ENCODE measurements at regions of chrX and their contacts with region 1.

Region 1: DNA sequence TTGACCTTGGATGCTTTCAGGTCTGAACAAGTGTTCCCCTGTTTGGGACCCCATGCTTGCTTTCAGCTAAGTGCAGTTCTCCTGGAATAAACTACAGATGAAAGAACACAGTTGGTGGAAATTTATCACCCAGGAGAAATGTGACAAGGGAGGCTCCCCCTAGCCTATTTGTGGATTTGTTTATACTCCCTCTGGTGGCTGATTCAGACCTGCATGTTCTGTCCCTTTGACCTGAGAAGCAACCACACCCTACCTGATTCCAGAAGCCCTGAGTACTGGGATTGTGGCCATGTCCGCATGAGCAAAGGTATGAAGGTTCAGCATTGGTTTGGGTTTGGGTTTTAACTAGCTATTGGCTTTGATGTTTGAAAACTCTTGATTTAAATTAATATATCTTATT is 440.9 kb downstream of the MID1IP1 start:
- DNase-seq: no peak
- ATAC-seq: peak in 1 of 2 donors; percentile 38

Region 2: GRCh38 chrX:38754102-38754790 is 487.9 kb before region 1 on chrX:
- intact Hi-C with region 1: loop called in 1 of 2 experiments (anchors 5 kb)
- DNase-seq: no peak
- ATAC-seq: peak in 1 of 2 donors; percentile 47

Region 3: DNA sequence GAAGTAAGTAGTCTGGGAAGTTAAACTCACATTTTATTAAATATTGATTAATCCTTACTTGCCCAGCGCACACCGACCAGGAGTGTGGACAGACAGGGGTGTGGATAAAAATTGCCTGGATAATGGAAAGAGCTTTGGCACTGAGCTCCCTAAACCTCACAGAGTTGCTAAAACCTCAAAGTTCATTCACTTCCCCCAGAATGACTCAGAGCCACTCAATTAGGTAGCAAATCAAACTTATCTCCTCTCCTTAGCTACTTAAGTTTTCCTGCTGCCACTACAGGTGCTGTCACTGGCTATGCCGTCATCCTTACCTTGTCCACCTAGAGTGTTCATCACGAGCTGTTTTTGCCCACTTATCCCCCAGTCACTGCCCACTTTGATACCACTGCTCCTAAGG is 467.9 kb before region 1 on chrX:
- intact Hi-C with region 1: loop called in 1 of 2 experiments (anchors 10 kb)
- DNase-seq: no peak
- ATAC-seq: no peak

Region 4: GRCh38 chrX:38929966-38930421 is 312.2 kb before region 1 on chrX:
- intact Hi-C with region 1: no loop called
- DNase-seq: no peak
- ATAC-seq: peak; percentile 38 to 72

Region 5: DNA sequence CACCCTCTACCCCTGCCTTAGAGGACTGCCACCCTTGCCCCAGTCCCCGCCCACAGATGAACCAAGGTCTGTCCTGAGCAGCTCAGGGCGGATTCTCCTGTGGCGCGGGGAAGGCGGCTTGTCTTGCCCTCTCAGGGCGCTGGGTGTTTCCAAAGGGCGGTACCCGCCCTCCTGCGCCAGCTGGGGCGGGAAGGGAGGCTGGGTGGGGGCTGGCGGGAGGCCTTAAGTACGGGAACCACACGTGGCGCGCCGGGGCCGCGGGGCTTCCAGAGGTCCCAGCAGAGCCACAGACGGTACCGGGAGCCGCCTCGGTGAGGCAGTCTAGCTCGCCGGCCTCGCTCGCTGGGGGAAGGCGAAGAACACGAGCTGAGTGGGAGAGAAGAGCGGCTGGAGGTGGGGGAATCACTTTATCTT is 79.9 kb before region 1 on chrX:
- intact Hi-C with region 1: loop called in 1 of 2 experiments (anchors 10 kb)
- DNase-seq: no peak
- ATAC-seq: peak; percentile 41 to 79

Region 6: DNA sequence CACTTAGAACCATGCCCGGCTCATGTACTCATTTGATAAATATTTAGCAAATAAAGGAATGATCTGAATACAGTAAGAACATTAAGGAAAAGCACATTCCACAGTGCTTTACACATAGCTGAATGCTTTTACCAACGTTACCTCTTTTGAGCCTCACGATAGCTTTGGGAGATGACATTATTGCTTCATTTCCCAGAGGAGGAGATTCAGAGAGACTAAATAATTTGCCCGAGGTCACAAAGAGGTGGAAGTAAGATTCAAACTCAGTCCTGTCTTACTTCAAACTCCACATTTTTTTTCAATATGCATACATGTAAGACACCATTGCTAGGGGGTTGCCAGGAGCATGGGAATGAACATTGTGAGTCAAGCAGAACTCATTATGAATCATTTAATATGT is 317.0 kb after region 1 on chrX:
- intact Hi-C with region 1: no loop called
- DNase-seq: no peak
- ATAC-seq: no peak

Measured in left cardiac atrium (tissue), 4 donors.